Naive thymus-derived CD4-positive, alpha-beta T cell (primary cell): ENCODE measurements at regions of chr2 and their contacts with region 1.

Region 1: GRCh38 chr2:200713003-200713703 is 98.6 kb upstream of the BZW1 start:
- DNase-seq: peak; percentile 72 to 96 (median 94)
- ATAC-seq: peak; percentile 98
- H3K4me3 ChIP-seq: peak overlapping the region; percentile 24
- H3K4me3 Mint-ChIP-seq: peak overlapping the region; percentile 75 to 88 (median 81)
- H3K27ac ChIP-seq: peak overlapping the region; percentile 82
- H3K27ac Mint-ChIP-seq: peak overlapping the region; percentile 97 to 100 (median 99)
- H3K4me1 ChIP-seq: peaks cover 5 to 8% of the 10 kb centered on the region in 2 donors
- H3K4me1 Mint-ChIP-seq: peaks cover 0 to 25% (median 12%) of the 10 kb centered on the region in 7 donors
- H3K27me3 ChIP-seq: no peaks in the 10 kb centered on the region
- H3K27me3 Mint-ChIP-seq: peaks cover 0 to 4% (median 0%) of the 10 kb centered on the region in 5 donors

Region 2: GRCh38 chr2:200662738-200663137 is 50.4 kb before region 1 on chr2:
- CTCF ChIA-PET with region 1: no interaction called
- POLR2A ChIA-PET with region 1: no interaction called
- intact Hi-C with region 1: no loop called
- DNase-seq: no peak
- ATAC-seq: no peak
- H3K4me3 ChIP-seq: no peak overlapping the region
- H3K4me3 Mint-ChIP-seq: no peak overlapping the region
- H3K27ac ChIP-seq: no peak overlapping the region
- H3K27ac Mint-ChIP-seq: no peak overlapping the region
- H3K4me1 ChIP-seq: no peaks in the 10 kb centered on the region
- H3K4me1 Mint-ChIP-seq: peaks cover 0 to 6% (median 0%) of the 10 kb centered on the region in 7 donors
- H3K27me3 ChIP-seq: no peaks in the 10 kb centered on the region
- H3K27me3 Mint-ChIP-seq: peaks cover 16 to 25% (median 21%) of the 10 kb centered on the region in 5 donors

Region 3: GRCh38 chr2:200735061-200735460 is 21.9 kb after region 1 on chr2:
- CTCF ChIA-PET with region 1: interaction called, 10 read pairs
- POLR2A ChIA-PET with region 1: no interaction called
- intact Hi-C with region 1: loop called (anchors 1 kb)
- DNase-seq: no peak
- ATAC-seq: no peak
- H3K4me3 ChIP-seq: no peak overlapping the region
- H3K4me3 Mint-ChIP-seq: no peak overlapping the region
- H3K27ac ChIP-seq: no peak overlapping the region
- H3K27ac Mint-ChIP-seq: no peak overlapping the region
- H3K4me1 ChIP-seq: no peaks in the 10 kb centered on the region
- H3K4me1 Mint-ChIP-seq: peaks cover 0 to 11% (median 0%) of the 10 kb centered on the region in 7 donors
- H3K27me3 ChIP-seq: no peaks in the 10 kb centered on the region
- H3K27me3 Mint-ChIP-seq: peaks cover 2 to 6% (median 4%) of the 10 kb centered on the region in 5 donors

Region 4: GRCh38 chr2:200747668-200748618 is 34.8 kb after region 1 on chr2:
- CTCF ChIA-PET with region 1: no interaction called
- POLR2A ChIA-PET with region 1: no interaction called
- intact Hi-C with region 1: no loop called
- DNase-seq: no peak
- ATAC-seq: no peak
- H3K4me3 ChIP-seq: no peak overlapping the region
- H3K4me3 Mint-ChIP-seq: no peak overlapping the region
- H3K27ac ChIP-seq: no peak overlapping the region
- H3K27ac Mint-ChIP-seq: peak overlapping the region in 1 of 9 donors; percentile 72
- H3K4me1 ChIP-seq: no peaks in the 10 kb centered on the region
- H3K4me1 Mint-ChIP-seq: no peaks in the 10 kb centered on the region
- H3K27me3 ChIP-seq: no peaks in the 10 kb centered on the region
- H3K27me3 Mint-ChIP-seq: peaks cover 4 to 14% (median 6%) of the 10 kb centered on the region in 5 donors

Region 5: GRCh38 chr2:200888704-200889625 is 175.8 kb after region 1 on chr2 and contains the starts of genes NIF3L1 and PPIL3:
- CTCF ChIA-PET with region 1: no interaction called
- POLR2A ChIA-PET with region 1: interaction called, 10 read pairs
- intact Hi-C with region 1: loop called (anchors 1 kb)
- DNase-seq: peak; percentile 88 to 97 (median 95)
- ATAC-seq: peak; percentile 89
- H3K4me3 ChIP-seq: peak within 1 kb of the TSS; percentile 83
- H3K4me3 Mint-ChIP-seq: peak within 1 kb of the TSS; percentile 88 to 100 (median 96)
- H3K27ac ChIP-seq: peak within 1 kb of the TSS; percentile 86
- H3K27ac Mint-ChIP-seq: peak within 1 kb of the TSS; percentile 97 to 100 (median 100)
- H3K4me1 ChIP-seq: peaks cover 23 to 26% of the 10 kb centered on the region in 2 donors
- H3K4me1 Mint-ChIP-seq: peaks cover 35 to 75% (median 60%) of the 10 kb centered on the region in 7 donors
- H3K27me3 ChIP-seq: no peaks in the 10 kb centered on the region
- H3K27me3 Mint-ChIP-seq: no peaks in the 10 kb centered on the region
- total RNA-seq, gene NIF3L1: 11.5 to 33.9 (median 31.4) TPM
- total RNA-seq, gene PPIL3: 28.5 to 69.7 (median 49.1) TPM

Region 6: GRCh38 chr2:201158111-201158929 is 445.2 kb after region 1 on chr2:
- CTCF ChIA-PET with region 1: interaction called, 3 read pairs
- POLR2A ChIA-PET with region 1: no interaction called
- intact Hi-C with region 1: loop called in 1 of 2 experiments (anchors 1 kb)
- DNase-seq: peak in 7 of 9 donors; percentile 62 to 78 (median 72)
- ATAC-seq: peak; percentile 92
- H3K4me3 ChIP-seq: no peak overlapping the region
- H3K4me3 Mint-ChIP-seq: peak overlapping the region in 3 of 10 donors; percentile 16 to 64 (median 33)
- H3K27ac ChIP-seq: peak overlapping the region; percentile 52
- H3K27ac Mint-ChIP-seq: peak overlapping the region; percentile 26 to 93 (median 89)
- H3K4me1 ChIP-seq: peaks cover 6 to 7% of the 10 kb centered on the region in 2 donors
- H3K4me1 Mint-ChIP-seq: peaks cover 12 to 35% (median 16%) of the 10 kb centered on the region in 7 donors
- H3K27me3 ChIP-seq: no peaks in the 10 kb centered on the region
- H3K27me3 Mint-ChIP-seq: no peaks in the 10 kb centered on the region

Region 7: DNA sequence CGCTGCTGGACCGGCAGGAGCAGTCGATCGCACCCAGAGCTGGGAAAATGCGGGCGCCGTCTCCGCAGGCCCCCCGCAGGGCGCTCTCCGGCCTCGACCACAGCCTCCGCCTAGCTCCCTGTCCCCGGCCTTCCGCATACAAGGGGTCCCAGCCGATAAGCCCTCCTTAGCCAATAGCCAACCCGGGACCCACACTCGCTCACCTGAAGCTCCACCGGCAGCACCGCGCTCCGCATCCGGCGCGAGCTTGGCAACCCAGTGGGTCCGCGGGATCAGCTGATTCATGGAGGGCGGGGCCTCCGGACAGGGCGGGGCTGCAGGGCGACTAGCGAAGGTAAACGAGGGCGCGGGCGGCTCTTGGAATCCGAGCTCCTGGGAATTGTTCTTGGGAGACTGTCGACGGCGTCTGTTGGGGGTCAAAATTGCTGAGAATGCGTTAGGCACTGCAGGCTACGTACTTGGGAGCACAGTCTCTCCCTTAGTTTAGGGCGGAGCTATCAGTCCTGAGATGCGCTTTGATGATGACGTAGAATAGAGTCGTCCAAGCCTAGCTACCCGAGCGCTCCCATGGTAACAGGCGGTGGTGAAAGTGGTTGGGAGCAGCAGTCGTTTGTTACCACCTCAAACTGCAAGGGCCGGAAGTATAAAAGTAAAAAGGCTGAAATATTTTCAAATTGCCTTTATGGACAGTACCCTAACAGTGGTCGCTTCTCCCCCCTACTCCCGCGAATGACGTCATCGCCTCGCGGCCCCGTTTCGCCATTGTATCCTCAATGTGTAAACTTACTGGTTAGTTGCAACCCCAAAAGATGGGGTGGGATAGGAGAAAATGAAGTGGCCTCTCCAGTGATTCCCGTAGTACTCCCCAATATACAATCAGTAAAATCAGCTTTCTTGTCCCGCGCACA is 1067.8 kb after region 1 on chr2 and contains the start of gene ALS2:
- CTCF ChIA-PET with region 1: no interaction called
- POLR2A ChIA-PET with region 1: interaction called, 4 read pairs
- intact Hi-C with region 1: loop called (anchors 2 to 10 kb)
- DNase-seq: peak; percentile 91 to 97 (median 95)
- ATAC-seq: peak; percentile 96
- H3K4me3 ChIP-seq: peak within 1 kb of the TSS; percentile 96
- H3K4me3 Mint-ChIP-seq: peak within 1 kb of the TSS; percentile 87 to 99 (median 98)
- H3K27ac ChIP-seq: peak within 1 kb of the TSS; percentile 84
- H3K27ac Mint-ChIP-seq: peak within 1 kb of the TSS; percentile 84 to 99 (median 97)
- H3K4me1 ChIP-seq: peaks cover 7 to 10% of the 10 kb centered on the region in 2 donors
- H3K4me1 Mint-ChIP-seq: peaks cover 5 to 36% (median 21%) of the 10 kb centered on the region in 7 donors
- H3K27me3 ChIP-seq: no peaks in the 10 kb centered on the region
- H3K27me3 Mint-ChIP-seq: peaks cover 0 to 22% (median 0%) of the 10 kb centered on the region in 5 donors
- total RNA-seq, gene ALS2: 8.9 to 13.5 (median 10.7) TPM